Left cardiac atrium (tissue), 4 donors: ENCODE measurements at regions of chr11 and their contacts with region 1.

Region 1: DNA sequence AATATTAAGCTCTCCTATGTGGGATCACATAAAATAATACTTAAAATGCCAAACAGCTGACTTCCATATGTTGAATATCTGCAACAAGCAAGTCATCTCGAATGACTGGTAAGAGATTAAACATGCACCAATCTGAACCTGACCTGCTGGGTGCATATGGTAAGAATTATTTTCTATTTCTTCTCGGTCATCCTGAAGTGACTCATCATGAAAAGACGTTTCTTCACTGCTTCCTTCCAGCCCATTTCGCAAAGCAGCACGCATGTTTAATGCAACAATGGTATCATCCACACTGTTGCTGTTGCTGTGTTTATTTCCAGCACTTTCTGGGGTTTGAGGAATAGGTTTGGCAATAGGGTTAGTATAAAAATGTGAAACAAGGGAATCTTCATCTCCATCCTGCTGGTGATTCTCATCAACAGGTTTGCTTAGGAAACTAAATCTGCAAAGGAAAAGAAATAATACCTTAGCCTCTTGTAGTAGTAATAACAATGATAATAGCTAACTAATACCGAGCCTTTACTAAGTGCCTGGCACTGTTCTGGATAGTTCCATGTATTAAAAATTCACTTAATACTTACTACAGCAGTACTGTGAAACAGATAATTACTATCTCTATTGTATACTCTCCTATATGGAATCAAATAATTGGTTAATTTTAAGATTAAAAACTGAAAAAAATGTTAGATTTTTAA is 52.0 kb upstream of the CHRNA10 start:
- DNase-seq: no peak
- ATAC-seq: no peak

Region 2: GRCh38 chr11:3775736-3776406 is 52.7 kb after region 1 on chr11:
- intact Hi-C with region 1: loop called in 1 of 2 experiments (anchors 10 kb)
- DNase-seq: no peak
- ATAC-seq: no peak